CD4-positive, alpha-beta memory T cell (primary cell): ENCODE measurements at regions of chr11 and their contacts with region 1.

Region 1: GRCh38 chr11:84564180-84564866 is 1062.8 kb downstream of the DLG2 start:
- DNase-seq: no peak
- H3K4me3 ChIP-seq: no peak overlapping the region
- H3K4me3 Mint-ChIP-seq: no peak overlapping the region
- H3K27ac ChIP-seq: no peak overlapping the region
- H3K27ac Mint-ChIP-seq: no peak overlapping the region
- H3K4me1 ChIP-seq: no peaks in the 10 kb centered on the region
- H3K4me1 Mint-ChIP-seq: no peaks in the 10 kb centered on the region
- H3K27me3 ChIP-seq: no peaks in the 10 kb centered on the region
- H3K27me3 Mint-ChIP-seq: no peaks in the 10 kb centered on the region

Region 2: DNA sequence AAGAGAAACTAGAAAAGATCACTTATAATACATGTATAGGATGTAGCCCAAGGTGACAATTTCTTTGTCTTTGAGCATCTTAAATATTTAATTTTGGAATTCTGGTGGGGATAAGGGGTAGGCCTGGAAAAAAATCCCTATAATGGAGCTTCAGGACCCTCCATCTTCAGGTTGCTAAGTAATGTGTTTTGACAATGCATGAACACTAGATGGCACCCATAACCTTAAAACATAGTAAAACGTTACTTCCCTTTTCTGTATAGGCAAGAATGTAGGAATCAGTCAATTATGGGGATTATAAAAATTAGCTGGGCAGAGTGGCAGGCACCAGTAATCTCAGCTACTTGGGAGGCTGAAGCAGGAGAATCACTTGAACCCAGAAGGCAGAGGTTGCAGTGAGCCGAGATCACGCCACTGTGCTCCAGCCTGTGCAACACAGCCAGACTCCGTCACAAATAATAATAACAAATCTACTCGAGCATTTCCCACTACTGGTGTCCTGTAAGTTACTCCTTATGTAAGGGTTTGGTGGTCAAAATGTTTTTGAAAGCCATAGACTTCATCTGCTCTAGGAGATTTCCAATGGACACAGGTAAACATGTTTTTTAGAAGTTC is 736.3 kb before region 1 on chr11:
- CTCF ChIA-PET with region 1: no interaction called
- POLR2A ChIA-PET with region 1: no interaction called
- intact Hi-C with region 1: loop called (anchors 5 kb)
- DNase-seq: no peak
- H3K4me3 ChIP-seq: no peak overlapping the region
- H3K4me3 Mint-ChIP-seq: no peak overlapping the region
- H3K27ac ChIP-seq: no peak overlapping the region
- H3K27ac Mint-ChIP-seq: no peak overlapping the region
- H3K4me1 ChIP-seq: no peaks in the 10 kb centered on the region
- H3K4me1 Mint-ChIP-seq: peaks cover 0 to 2% (median 0%) of the 10 kb centered on the region in 4 donors
- H3K27me3 ChIP-seq: no peaks in the 10 kb centered on the region
- H3K27me3 Mint-ChIP-seq: peaks cover 0 to 5% of the 10 kb centered on the region in 2 donors